HEK293 (cell line): ENCODE measurements at regions of chr13 and their contacts with region 1.

Region 1: GRCh38 chr13:27374650-27375049 is 49.8 kb upstream of the GTF3A start:
- H3K4me3 ChIP-seq: no peak overlapping the region
- H3K27ac ChIP-seq: no peak overlapping the region
- H3K4me1 ChIP-seq: no peaks in the 10 kb centered on the region
- CTCF ChIP-seq: no peak; the same call in 1 of the 2 replicates

Region 2: DNA sequence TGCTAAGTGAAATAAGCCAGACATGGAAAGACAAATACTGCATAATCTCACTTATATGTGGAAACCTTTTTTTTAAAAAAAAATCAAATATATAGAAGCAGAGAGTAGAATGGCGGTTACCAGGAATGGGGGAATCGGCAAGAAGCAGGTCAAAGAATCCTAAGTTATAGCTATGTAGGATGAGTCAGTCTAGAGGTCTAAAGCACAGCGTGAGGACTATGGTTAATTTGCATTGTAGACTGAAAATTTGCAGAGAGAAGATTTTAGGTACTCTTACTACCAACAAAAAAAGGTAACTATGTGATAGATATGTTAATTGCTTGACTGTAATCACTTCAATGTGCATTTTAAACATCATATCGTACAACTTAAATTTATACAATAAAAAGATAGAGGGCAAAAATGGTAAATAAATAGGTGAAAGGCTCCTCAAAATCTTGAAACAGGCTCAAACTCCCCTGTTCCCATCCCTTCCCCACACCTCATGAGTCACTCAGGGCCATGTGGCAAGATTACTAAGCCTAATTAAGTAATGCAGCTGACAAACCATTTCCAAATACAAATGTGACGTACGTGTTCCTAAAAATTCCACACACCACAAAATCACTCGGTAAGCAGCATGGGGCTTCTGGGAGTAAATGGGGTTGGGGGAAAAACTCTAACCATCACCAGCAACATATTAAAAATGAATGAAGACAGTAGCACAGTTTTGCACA is 362.0 kb before region 1 on chr13:
- CTCF ChIA-PET with region 1: no interaction called
- POLR2A ChIA-PET with region 1: no interaction called
- H3K4me3 ChIP-seq: no peak overlapping the region
- H3K27ac ChIP-seq: no peak overlapping the region
- H3K4me1 ChIP-seq: no peaks in the 10 kb centered on the region
- CTCF ChIP-seq: no peak

Region 3: DNA sequence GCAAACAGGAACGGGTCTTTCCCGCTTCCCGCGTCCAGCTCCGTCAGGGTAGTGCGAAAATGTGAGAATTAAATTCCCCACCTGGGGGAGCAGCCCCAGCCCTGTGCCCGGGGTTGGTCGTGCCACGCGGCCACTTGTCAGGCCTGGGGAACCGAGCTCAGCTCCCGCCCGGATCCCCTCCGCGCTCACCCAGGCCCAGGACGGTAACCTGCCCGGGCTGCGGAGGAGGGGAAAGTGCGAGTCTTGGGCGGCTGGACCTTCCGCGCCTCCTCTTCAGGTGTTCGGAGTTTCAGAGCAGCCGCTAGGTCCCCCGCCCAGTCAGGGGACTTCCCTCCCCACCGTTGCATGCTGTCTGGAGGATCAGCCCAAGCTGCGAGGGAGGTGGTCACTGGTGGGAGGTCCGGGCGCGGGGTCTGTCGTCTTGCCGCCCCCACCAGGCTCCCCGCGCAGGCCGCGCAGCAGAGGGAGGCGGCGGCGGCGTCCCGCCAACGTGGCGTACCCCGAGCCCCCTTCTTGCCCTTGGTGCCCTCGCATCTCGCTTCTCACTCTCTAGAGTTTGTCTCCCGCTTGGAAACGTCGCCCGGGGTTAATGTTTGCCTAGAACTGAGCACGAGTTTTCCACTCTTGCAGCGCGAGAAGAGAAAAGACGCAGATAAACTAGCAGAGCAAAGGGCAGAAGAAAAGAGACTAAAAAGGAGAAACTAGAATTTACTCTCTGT is 605.8 kb after region 1 on chr13:
- CTCF ChIA-PET with region 1: interaction called, 23 read pairs
- POLR2A ChIA-PET with region 1: no interaction called
- H3K4me3 ChIP-seq: no peak overlapping the region
- H3K27ac ChIP-seq: no peak overlapping the region
- H3K4me1 ChIP-seq: no peaks in the 10 kb centered on the region
- CTCF ChIP-seq: no peak

Region 4: GRCh38 chr13:27985600-27985999 is 611.0 kb after region 1 on chr13:
- CTCF ChIA-PET with region 1: interaction called, 23 read pairs
- POLR2A ChIA-PET with region 1: no interaction called
- H3K4me3 ChIP-seq: no peak overlapping the region
- H3K27ac ChIP-seq: no peak overlapping the region
- H3K4me1 ChIP-seq: no peaks in the 10 kb centered on the region
- CTCF ChIP-seq: no peak